ENCODE measurements at regions of chr12 and their contacts with region 1.

Region 1: DNA sequence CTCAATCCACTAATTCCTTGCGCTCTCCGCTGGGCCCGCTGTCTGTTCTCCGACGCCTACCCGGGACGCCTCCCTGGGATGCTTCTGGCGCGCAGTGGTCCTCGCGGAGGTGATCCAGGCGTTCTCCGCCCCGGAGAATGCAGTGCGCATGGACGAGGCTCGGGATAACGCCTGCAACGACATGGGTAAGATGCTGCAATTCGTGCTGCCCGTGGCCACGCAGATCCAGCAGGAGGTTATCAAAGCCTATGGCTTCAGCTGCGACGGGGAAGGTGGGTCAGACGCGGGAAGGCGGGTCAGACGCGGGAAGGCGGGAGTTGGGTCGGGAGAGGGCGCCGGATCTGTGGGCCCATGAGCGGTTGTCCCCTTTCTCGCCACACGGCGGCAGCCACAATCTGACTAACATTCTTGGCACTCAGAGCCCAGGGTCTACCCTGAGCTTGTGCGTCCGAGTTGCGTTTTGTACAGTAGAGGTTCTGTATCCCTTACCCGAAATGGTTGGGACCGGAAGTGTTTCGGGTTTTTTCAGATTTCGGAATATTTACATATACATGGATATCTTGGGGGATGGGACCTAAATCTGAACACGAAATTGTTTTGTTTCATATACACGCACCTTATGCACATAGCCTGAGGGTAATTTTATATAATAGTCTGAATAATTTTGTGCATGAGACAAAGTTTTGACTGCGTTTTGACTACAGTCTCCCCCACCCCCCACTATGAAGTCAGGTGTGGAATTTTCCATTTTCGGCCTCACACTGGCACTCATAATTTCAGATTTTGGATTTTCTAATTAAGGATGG is 762 bp downstream of the C12orf57 start:
- DNase-seq: peak; percentile 90
- ATAC-seq: peak; percentile 58
- H3K4me3 ChIP-seq: peak overlapping the region; percentile 54 to 79 (median 73)
- H3K27ac ChIP-seq: peak overlapping the region; percentile 98
- H3K4me1 ChIP-seq: peaks cover 38% of the 10 kb centered on the region
- H3K27me3 ChIP-seq: no peaks in the 10 kb centered on the region
- CTCF ChIP-seq: peak; percentile 96
- EP300 ChIP-seq: no peak
- POLR2A ChIP-seq: no peak
- RAD21 ChIP-seq: peak; percentile 81

Region 2: GRCh38 chr12:6873094-6874014 is 71.2 kb before region 1 on chr12 and contains the start of gene SPSB2:
- CTCF ChIA-PET with region 1: interaction called, 14 read pairs
- POLR2A ChIA-PET with region 1: interaction called, 45 read pairs
- in situ Hi-C with region 1: no loop called
- intact Hi-C with region 1: loop called (anchors 1 kb)
- DNase-seq: peak; percentile 94
- ATAC-seq: peak; percentile 81
- H3K4me3 ChIP-seq: peak within 1 kb of the TSS; percentile 74 to 95 (median 76)
- H3K27ac ChIP-seq: peak within 1 kb of the TSS; percentile 79
- H3K4me1 ChIP-seq: peaks cover 48% of the 10 kb centered on the region
- H3K27me3 ChIP-seq: no peaks in the 10 kb centered on the region; a peak in 1 of 5 replicates
- CTCF ChIP-seq: no peak
- EP300 ChIP-seq: 0 out of 4 replicates have a peak, but pooled peaks of 1 of the 2 experiments have one; percentile 5
- POLR2A ChIP-seq: no peak; a peak in 1 of 4 replicates
- RAD21 ChIP-seq: no peak
- total RNA-seq, gene SPSB2: 4.0 and 6.2 TPM in 2 replicates

Region 3: DNA sequence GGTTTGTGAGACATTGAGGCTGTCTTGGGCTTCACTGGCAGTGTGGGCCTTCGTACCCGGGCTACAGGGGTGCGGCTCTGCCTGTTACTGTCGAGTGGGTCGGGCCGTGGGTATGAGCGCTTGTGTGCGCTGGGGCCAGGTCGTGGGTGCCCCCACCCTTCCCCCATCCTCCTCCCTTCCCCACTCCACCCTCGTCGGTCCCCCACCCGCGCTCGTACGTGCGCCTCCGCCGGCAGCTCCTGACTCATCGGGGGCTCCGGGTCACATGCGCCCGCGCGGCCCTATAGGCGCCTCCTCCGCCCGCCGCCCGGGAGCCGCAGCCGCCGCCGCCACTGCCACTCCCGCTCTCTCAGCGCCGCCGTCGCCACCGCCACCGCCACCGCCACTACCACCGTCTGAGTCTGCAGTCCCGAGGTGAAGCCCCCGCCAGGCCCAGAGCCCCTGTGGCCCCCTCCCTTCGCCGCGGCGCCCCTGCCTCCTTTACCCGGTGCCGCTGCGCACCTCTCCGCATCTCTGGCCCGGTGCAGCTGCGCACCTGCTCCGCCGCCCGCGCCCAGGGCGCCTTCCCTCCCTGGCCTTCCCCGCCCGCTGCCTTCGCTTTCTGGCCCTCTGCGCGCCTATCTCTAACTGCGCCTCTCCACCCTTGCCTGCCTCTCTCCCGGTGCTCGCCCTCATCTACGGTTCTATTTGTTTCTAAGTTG is 30.2 kb before region 1 on chr12 and contains the start of gene ENO2:
- CTCF ChIA-PET with region 1: no interaction called
- POLR2A ChIA-PET with region 1: interaction called, 15 read pairs
- in situ Hi-C with region 1: no loop called
- intact Hi-C with region 1: no loop called
- DNase-seq: peak; percentile 44
- ATAC-seq: peak; percentile 89
- H3K4me3 ChIP-seq: peak within 1 kb of the TSS; percentile 63 to 90 (median 77)
- H3K27ac ChIP-seq: peak within 1 kb of the TSS; percentile 84
- H3K4me1 ChIP-seq: peaks cover 48% of the 10 kb centered on the region
- H3K27me3 ChIP-seq: no peaks in the 10 kb centered on the region
- CTCF ChIP-seq: no peak
- EP300 ChIP-seq: no peak
- POLR2A ChIP-seq: peak in 1 of 2 experiments; percentile 68; a peak in 2 of 4 replicates
- RAD21 ChIP-seq: no peak
- total RNA-seq, gene ENO2: 15.9 and 19.3 TPM in 2 replicates

Region 4: GRCh38 chr12:6978609-6979011 is 34.0 kb after region 1 on chr12:
- CTCF ChIA-PET with region 1: no interaction called
- POLR2A ChIA-PET with region 1: interaction called, 65 read pairs
- in situ Hi-C with region 1: no loop called
- intact Hi-C with region 1: no loop called
- DNase-seq: no peak
- ATAC-seq: no peak
- H3K4me3 ChIP-seq: no peak overlapping the region
- H3K27ac ChIP-seq: peak overlapping the region; percentile 98
- H3K4me1 ChIP-seq: peaks cover 55% of the 10 kb centered on the region
- H3K27me3 ChIP-seq: no peaks in the 10 kb centered on the region
- CTCF ChIP-seq: no peak
- EP300 ChIP-seq: no peak
- POLR2A ChIP-seq: no peak
- RAD21 ChIP-seq: no peak

Region 5: DNA sequence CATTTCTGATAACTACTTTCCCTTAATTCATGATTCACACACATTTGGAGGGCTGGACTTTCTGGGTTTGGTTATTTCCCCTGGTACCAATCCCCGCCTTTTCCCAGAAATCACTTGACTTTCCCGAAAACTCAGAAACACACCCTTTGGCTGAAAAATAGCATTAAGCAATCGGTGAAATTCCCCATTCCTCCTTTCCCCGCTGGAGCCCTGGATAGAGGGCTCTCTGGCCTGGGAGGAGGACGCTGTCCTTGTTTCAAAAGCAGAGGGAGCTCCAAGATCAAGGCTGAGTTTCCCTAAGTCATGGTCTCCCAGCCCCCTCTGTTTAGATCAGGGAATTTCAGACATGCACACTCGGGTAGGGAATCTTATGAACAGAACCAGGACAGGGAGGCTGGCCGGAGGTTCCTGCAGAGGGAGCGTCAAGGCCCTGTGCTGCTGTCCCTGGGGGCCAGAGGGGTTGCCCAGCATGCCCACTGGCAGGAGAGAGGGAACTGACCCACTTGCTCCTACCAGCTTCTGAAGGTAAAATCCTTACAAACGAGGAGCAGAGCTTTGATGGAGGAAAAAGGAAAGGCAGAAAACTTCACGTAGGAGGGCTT is 115.9 kb after region 1 on chr12 and contains the start of gene C1S:
- CTCF ChIA-PET with region 1: no interaction called
- POLR2A ChIA-PET with region 1: interaction called, 18 read pairs
- in situ Hi-C with region 1: no loop called
- intact Hi-C with region 1: no loop called
- DNase-seq: peak; percentile 93
- ATAC-seq: peak; percentile 93
- H3K4me3 ChIP-seq: peak within 1 kb of the TSS in 2 of 3 experiments; percentile 6 to 27; a peak in 3 of 6 replicates
- H3K27ac ChIP-seq: peak within 1 kb of the TSS; percentile 30
- H3K4me1 ChIP-seq: peaks cover 64% of the 10 kb centered on the region
- H3K27me3 ChIP-seq: no peaks in the 10 kb centered on the region
- CTCF ChIP-seq: peak; percentile 94
- EP300 ChIP-seq: peak in 1 of 2 experiments; percentile 37; a peak in 1 of 4 replicates
- POLR2A ChIP-seq: no peak
- RAD21 ChIP-seq: peak; percentile 96
- total RNA-seq, gene C1S: 8.2 and 18.2 TPM in 2 replicates

Region 6: GRCh38 chr12:7122811-7123769 is 178.5 kb after region 1 on chr12:
- CTCF ChIA-PET with region 1: no interaction called
- POLR2A ChIA-PET with region 1: interaction called, 25 read pairs
- in situ Hi-C with region 1: loop called (anchors 10 kb)
- intact Hi-C with region 1: no loop called
- DNase-seq: no peak
- ATAC-seq: peak; percentile 26
- H3K4me3 ChIP-seq: peak overlapping the region; percentile 20 to 65 (median 29); a peak in 5 of 6 replicates
- H3K27ac ChIP-seq: peak overlapping the region; percentile 77
- H3K4me1 ChIP-seq: peaks cover 74% of the 10 kb centered on the region
- H3K27me3 ChIP-seq: no peaks in the 10 kb centered on the region; a peak in 1 of 5 replicates
- CTCF ChIP-seq: no peak
- EP300 ChIP-seq: peak in 1 of 2 experiments; percentile 82; a peak in 2 of 4 replicates
- POLR2A ChIP-seq: peak in 1 of 2 experiments; percentile 17; a peak in 1 of 4 replicates
- RAD21 ChIP-seq: no peak

Region 7: DNA sequence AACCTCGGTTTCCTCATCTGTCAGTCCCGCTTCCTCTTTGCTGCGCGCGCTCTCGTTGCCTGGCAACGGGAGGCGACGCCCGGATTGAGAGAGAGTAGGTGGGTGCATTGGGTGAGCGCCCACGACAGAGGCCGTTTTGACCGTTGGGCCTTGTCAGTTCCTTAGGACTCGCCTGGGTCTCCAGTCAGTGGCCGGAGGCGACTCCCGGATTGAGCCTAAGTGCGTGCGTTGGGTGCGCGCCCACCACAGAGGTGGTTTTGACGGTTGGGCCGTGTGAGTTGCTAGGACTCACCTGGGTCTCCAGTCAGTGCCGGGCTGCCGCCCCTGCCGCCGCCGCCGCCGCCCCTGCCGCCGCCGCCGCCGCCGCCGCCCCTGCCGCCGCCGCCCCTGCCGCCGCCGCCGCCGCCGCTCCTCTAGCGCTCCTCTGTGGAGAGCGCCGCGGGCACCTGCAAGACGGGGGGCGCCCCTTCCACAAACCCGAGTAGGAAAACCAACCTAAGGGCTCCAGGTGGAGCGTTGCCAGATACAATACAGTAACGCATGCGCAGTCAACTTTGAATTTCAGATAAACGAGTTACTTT is 683.9 kb after region 1 on chr12:
- CTCF ChIA-PET with region 1: no interaction called
- POLR2A ChIA-PET with region 1: no interaction called
- in situ Hi-C with region 1: no loop called
- intact Hi-C with region 1: no loop called
- DNase-seq: no peak
- ATAC-seq: no peak
- H3K4me3 ChIP-seq: no peak overlapping the region
- H3K27ac ChIP-seq: no peak overlapping the region
- H3K4me1 ChIP-seq: no peaks in the 10 kb centered on the region
- H3K27me3 ChIP-seq: no peaks in the 10 kb centered on the region
- CTCF ChIP-seq: no peak
- EP300 ChIP-seq: no peak
- POLR2A ChIP-seq: no peak
- RAD21 ChIP-seq: no peak

Measured in HepG2 (cell line).